ENCODE measurements at regions of chr4 and their contacts with region 1.

Region 1: DNA sequence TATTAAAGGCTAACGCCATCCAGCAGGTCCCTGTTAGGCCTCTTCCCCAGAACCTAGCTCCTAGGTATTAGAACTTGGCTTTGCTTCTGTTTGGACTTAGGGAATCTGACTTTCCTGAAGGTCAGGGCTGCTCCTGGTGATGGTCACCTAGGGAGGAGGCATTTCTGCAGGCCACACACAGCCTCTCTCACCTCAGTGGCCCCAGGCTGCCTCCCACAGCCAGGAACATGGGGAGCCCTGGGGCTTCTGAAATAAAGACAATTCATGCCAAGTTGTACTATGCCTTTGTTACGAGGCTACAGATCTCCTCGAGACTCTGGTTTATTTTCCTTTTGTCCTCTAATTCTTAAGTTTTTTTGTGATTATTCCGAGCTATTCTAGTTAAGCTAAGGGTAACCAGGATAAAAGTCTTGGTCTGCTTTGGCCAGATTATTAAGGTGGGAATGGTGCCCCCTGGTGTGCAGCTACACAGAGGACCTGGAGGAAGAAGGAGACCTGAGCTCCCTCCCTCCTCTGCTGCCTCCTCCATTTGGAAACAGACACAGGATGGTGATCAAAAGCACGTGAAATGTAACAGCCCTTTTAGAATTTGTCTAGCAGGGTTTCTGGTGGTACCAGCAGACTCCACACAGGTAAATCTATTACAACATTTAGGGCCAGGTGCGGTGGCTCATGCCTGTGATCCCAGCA is 131.0 kb downstream of the DCLK2 start:
- DNase-seq: peak; percentile 25
- ATAC-seq: no peak
- H3K4me3 Mint-ChIP-seq: no peak overlapping the region
- H3K27ac Mint-ChIP-seq: no peak overlapping the region
- H3K4me1 Mint-ChIP-seq: no peaks in the 10 kb centered on the region
- H3K27me3 Mint-ChIP-seq: peaks cover 3% of the 10 kb centered on the region
- CTCF ChIP-seq: no peak

Region 2: DNA sequence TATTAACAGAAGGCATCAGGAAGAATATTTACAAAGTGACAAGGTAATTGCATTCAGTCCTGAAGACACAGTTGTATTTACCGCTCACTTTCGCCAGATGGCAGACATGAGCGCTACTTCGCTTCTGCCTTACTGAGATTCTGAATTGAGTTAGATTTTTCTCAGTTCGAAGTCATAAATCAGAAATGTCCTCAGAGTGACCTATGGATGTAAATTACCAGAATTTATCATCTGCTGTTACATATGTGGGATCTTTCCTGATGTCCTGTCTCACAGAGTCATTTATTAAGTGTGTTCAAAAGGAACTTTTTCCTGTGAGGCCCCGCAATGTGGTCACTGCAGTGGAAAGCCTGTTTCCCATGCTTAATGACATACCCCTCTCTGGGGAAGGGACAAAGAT is 228.3 kb before region 1 on chr4:
- CTCF ChIA-PET with region 1: interaction called, 8 read pairs
- POLR2A ChIA-PET with region 1: no interaction called
- intact Hi-C with region 1: loop called (anchors 1 kb)
- DNase-seq: no peak
- ATAC-seq: peak; percentile 60
- H3K4me3 Mint-ChIP-seq: no peak overlapping the region
- H3K27ac Mint-ChIP-seq: no peak overlapping the region
- H3K4me1 Mint-ChIP-seq: no peaks in the 10 kb centered on the region
- H3K27me3 Mint-ChIP-seq: no peaks in the 10 kb centered on the region
- CTCF ChIP-seq: peak; percentile 80

Region 3: GRCh38 chr4:149999485-150000074 is 209.7 kb before region 1 on chr4:
- CTCF ChIA-PET with region 1: interaction called, 142 read pairs
- POLR2A ChIA-PET with region 1: no interaction called
- intact Hi-C with region 1: loop called (anchors 1 kb)
- DNase-seq: no peak
- ATAC-seq: peak; percentile 54
- H3K4me3 Mint-ChIP-seq: no peak overlapping the region
- H3K27ac Mint-ChIP-seq: no peak overlapping the region
- H3K4me1 Mint-ChIP-seq: no peaks in the 10 kb centered on the region
- H3K27me3 Mint-ChIP-seq: no peaks in the 10 kb centered on the region
- CTCF ChIP-seq: no peak

Region 4: DNA sequence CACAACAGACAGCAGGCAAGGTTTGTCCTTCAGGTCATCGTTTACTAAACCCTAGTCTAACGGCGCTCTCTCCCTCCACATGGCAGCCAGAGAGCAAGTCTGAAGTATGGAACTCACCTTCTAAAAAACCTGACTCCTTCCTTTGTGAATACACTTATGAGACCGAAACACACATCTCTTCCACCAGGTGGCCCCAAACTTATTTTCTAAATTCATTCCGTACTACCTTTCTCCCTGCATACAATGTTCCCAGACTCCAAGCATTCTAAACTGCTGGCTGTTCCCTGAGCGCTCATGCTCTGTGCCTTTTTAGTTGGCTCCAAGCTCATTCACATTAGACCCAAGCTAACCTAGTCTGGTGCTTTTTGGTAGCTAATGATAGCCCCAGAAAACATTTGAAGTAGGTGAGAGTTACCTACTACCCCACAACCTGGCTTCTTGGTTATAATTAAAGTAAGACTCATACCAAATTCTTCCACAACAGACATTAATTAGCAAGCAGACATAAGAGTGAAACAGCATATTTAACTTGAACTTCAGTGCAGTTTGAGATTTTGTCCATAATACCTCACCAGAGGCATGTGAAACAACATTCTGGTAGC is 198.7 kb before region 1 on chr4:
- CTCF ChIA-PET with region 1: interaction called, 142 read pairs
- POLR2A ChIA-PET with region 1: no interaction called
- intact Hi-C with region 1: loop called (anchors 1 kb)
- DNase-seq: no peak
- ATAC-seq: peak; percentile 37
- H3K4me3 Mint-ChIP-seq: no peak overlapping the region
- H3K27ac Mint-ChIP-seq: no peak overlapping the region
- H3K4me1 Mint-ChIP-seq: no peaks in the 10 kb centered on the region
- H3K27me3 Mint-ChIP-seq: peaks cover 5% of the 10 kb centered on the region
- CTCF ChIP-seq: no peak

Region 5: GRCh38 chr4:150098214-150098613 is 111.1 kb before region 1 on chr4:
- CTCF ChIA-PET with region 1: no interaction called
- POLR2A ChIA-PET with region 1: no interaction called
- intact Hi-C with region 1: no loop called
- DNase-seq: no peak
- ATAC-seq: no peak
- H3K4me3 Mint-ChIP-seq: no peak overlapping the region
- H3K27ac Mint-ChIP-seq: no peak overlapping the region
- H3K4me1 Mint-ChIP-seq: no peaks in the 10 kb centered on the region
- H3K27me3 Mint-ChIP-seq: peaks cover 4% of the 10 kb centered on the region
- CTCF ChIP-seq: no peak

Region 6: GRCh38 chr4:150108691-150109090 is 100.6 kb before region 1 on chr4:
- CTCF ChIA-PET with region 1: no interaction called
- POLR2A ChIA-PET with region 1: no interaction called
- intact Hi-C with region 1: no loop called
- DNase-seq: no peak
- ATAC-seq: no peak
- H3K4me3 Mint-ChIP-seq: no peak overlapping the region
- H3K27ac Mint-ChIP-seq: no peak overlapping the region
- H3K4me1 Mint-ChIP-seq: no peaks in the 10 kb centered on the region
- H3K27me3 Mint-ChIP-seq: peaks cover 5% of the 10 kb centered on the region
- CTCF ChIP-seq: no peak

Measured in activated B cell treated with CpG ODN at 0.5 μM for 24 hours (primary cell).